MCF 10A (cell line): ENCODE measurements at regions of chr3 and their contacts with region 1.

Region 1: GRCh38 chr3:9503283-9503682 is 50.3 kb downstream of the LHFPL4 start:
- DNase-seq: peak; percentile 73
- H3K4me3 Mint-ChIP-seq: no peak overlapping the region
- H3K27ac Mint-ChIP-seq: no peak overlapping the region
- H3K4me1 Mint-ChIP-seq: peaks cover 5% of the 10 kb centered on the region
- H3K27me3 Mint-ChIP-seq: no peaks in the 10 kb centered on the region
- CTCF ChIP-seq: peak; percentile 94

Region 2: GRCh38 chr3:9352917-9353752 is 150.1 kb before region 1 on chr3:
- CTCF ChIA-PET with region 1: interaction called, 5 read pairs
- POLR2A ChIA-PET with region 1: no interaction called
- intact Hi-C with region 1: loop called (anchors 1 kb)
- DNase-seq: peak; percentile 67
- H3K4me3 Mint-ChIP-seq: no peak overlapping the region
- H3K27ac Mint-ChIP-seq: no peak overlapping the region
- H3K4me1 Mint-ChIP-seq: peaks cover 24% of the 10 kb centered on the region
- H3K27me3 Mint-ChIP-seq: no peaks in the 10 kb centered on the region
- CTCF ChIP-seq: peak; percentile 90

Region 3: DNA sequence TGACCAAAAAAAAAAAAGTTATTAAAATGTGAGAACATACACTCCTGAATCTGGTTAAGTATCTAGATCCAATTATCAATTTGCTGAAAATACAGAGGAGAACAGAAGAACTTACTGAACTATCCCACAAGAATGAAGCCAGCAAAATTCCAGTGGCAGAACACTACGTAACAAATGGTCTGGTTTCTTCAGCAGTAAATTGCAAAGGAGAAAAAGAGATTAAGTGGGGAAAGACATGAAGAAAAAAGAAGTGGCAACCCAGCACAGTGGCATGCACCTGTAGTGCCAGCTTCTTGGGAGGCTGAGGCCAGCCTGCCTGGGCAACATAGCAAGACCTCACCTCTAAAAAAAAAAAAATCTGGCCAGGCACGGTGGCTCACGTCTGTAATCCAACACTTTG is 11.8 kb before region 1 on chr3:
- CTCF ChIA-PET with region 1: interaction called, 34 read pairs
- POLR2A ChIA-PET with region 1: interaction called, 4 read pairs
- intact Hi-C with region 1: no loop called
- DNase-seq: no peak
- H3K4me3 Mint-ChIP-seq: no peak overlapping the region
- H3K27ac Mint-ChIP-seq: no peak overlapping the region
- H3K4me1 Mint-ChIP-seq: no peaks in the 10 kb centered on the region
- H3K27me3 Mint-ChIP-seq: no peaks in the 10 kb centered on the region
- CTCF ChIP-seq: no peak

Region 4: GRCh38 chr3:9649791-9650521 is 146.7 kb after region 1 on chr3:
- CTCF ChIA-PET with region 1: interaction called, 16 read pairs
- POLR2A ChIA-PET with region 1: interaction called, 4 read pairs
- intact Hi-C with region 1: loop called (anchors 2 kb)
- DNase-seq: no peak
- H3K4me3 Mint-ChIP-seq: peak overlapping the region; percentile 93
- H3K27ac Mint-ChIP-seq: peak overlapping the region; percentile 88
- H3K4me1 Mint-ChIP-seq: peaks cover 4% of the 10 kb centered on the region
- H3K27me3 Mint-ChIP-seq: no peaks in the 10 kb centered on the region
- CTCF ChIP-seq: no peak

Region 5: GRCh38 chr3:9890249-9891071 is 387.2 kb after region 1 on chr3 and contains the start of gene JAGN1:
- CTCF ChIA-PET with region 1: no interaction called
- POLR2A ChIA-PET with region 1: no interaction called
- intact Hi-C with region 1: no loop called
- DNase-seq: peak; percentile 90
- H3K4me3 Mint-ChIP-seq: peak within 1 kb of the TSS; percentile 91
- H3K27ac Mint-ChIP-seq: peak within 1 kb of the TSS; percentile 98
- H3K4me1 Mint-ChIP-seq: peaks cover 45% of the 10 kb centered on the region
- H3K27me3 Mint-ChIP-seq: no peaks in the 10 kb centered on the region
- CTCF ChIP-seq: no peak
- total RNA-seq, gene JAGN1: 49.7 and 55.4 TPM in 2 replicates